HEK293 (cell line): ENCODE measurements at regions of chr7 and their contacts with region 1.

Region 1: DNA sequence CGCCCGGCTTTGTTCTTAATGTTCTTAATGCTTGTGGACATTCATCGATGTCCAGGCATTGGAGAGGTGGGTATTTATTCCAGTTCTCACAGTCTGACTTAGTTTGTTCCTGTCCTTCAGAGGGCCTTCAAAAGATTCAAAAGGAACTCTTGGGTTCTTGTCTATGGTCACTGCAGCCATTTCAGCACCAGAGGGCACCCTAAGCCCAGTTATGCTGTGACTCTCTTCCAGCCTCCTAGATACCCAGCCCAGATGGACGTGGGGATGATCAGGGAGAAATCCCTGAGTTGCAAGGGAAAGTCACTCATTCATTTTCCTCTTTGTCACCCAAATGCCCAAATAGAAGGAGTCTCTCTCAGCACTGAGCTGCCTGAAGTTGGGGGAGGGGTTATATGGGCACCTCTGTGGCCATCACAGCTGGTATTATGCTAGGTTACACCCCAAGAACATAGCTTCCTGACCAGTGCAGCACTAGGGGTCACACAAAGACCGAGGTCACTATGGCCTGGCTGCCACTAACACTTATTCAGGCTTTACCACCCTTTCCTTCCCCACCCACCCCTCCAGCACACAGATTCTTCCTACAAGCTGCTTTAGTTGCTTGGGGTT is 26.5 kb upstream of the CCDC126 start:
- H3K4me3 ChIP-seq: no peak overlapping the region
- H3K27ac ChIP-seq: no peak overlapping the region
- H3K4me1 ChIP-seq: no peaks in the 10 kb centered on the region
- CTCF ChIP-seq: peak; percentile 68; the same call in 1 of the 2 replicates

Region 2: DNA sequence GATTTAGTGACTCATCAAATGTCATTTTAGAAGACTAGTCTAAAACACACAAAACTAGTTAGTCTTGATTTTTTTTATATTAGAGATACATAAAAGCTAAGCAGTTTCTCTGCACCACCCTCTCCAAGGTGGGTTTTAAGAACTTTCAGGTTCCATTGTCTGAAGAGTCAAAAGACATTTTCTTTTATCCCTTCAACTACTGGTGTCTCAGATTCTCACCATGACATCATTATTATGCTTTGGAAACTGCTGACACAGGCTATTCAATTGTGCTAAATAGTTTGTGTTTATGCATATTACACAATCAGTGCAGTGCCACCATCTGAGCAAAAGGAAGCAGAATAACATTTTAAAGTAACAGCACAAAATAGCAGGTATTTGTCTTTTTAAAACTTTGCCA is 152.7 kb before region 1 on chr7:
- CTCF ChIA-PET with region 1: no interaction called
- POLR2A ChIA-PET with region 1: no interaction called
- H3K4me3 ChIP-seq: no peak overlapping the region
- H3K27ac ChIP-seq: no peak overlapping the region
- H3K4me1 ChIP-seq: peaks cover 23% of the 10 kb centered on the region
- CTCF ChIP-seq: no peak

Region 3: DNA sequence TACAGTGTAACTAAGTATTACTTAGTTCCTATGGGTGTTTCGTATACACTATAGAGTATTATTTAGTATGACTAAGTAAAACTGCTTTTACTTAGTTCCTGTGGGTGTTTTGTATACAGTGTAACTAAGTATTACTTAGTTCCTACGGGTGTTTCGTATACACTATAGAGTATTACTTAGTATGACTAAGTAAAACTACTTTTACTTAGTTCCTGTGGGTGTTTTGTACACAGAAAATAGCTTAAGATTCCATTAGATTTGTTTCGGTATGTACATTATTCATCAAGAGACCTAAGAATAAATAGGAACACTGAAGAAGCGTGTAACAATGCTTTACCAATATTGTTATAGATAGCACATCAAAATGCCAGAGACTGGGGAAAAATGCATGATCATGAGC is 125.4 kb before region 1 on chr7:
- CTCF ChIA-PET with region 1: no interaction called
- POLR2A ChIA-PET with region 1: no interaction called
- H3K4me3 ChIP-seq: no peak overlapping the region
- H3K27ac ChIP-seq: no peak overlapping the region
- H3K4me1 ChIP-seq: peaks cover 9% of the 10 kb centered on the region
- CTCF ChIP-seq: no peak

Region 4: GRCh38 chr7:23474094-23474828 is 96.4 kb before region 1 on chr7:
- CTCF ChIA-PET with region 1: no interaction called
- POLR2A ChIA-PET with region 1: no interaction called
- H3K4me3 ChIP-seq: peak overlapping the region; percentile 84
- H3K27ac ChIP-seq: peak overlapping the region; percentile 97
- H3K4me1 ChIP-seq: peaks cover 27% of the 10 kb centered on the region
- CTCF ChIP-seq: no peak; the same call in 1 of the 2 replicates

Region 5: DNA sequence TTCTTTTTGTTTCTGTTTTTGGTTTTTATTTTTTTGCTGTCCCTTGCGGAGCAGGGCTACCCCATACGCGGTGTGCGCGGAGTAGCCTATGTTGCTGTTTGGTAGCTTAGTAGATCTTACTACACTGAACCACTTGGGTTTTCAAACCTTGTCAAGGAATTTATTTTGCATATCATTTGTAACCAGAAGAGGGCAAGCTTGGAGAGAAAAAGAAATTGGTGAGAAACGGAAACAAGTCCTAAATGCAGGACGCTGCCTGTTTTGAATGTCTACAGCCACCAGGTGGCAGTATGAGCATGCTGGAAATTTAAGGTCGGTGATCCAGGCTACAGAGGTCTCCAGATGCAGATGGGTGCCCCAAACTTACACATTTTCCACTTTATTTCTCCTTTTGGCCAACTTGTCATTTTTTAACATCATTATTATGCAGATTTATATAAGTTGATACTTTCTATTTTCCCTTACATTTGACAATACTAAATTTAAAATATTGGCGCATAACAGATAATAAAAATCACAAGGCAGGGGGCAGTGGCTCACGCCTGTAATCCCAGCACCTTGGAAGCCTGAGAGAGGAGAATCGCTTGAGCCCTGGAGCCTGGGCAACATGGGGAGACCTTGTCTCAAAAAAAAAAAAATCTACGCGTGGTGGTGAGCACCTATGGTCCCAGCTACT is 23.7 kb before region 1 on chr7:
- CTCF ChIA-PET with region 1: interaction called, 15 read pairs
- POLR2A ChIA-PET with region 1: no interaction called
- H3K4me3 ChIP-seq: no peak overlapping the region
- H3K27ac ChIP-seq: no peak overlapping the region
- H3K4me1 ChIP-seq: no peaks in the 10 kb centered on the region; the same call in 1 of the 2 replicates
- CTCF ChIP-seq: peak; percentile 87

Region 6: GRCh38 chr7:24417526-24418120 is 846.9 kb after region 1 on chr7:
- CTCF ChIA-PET with region 1: interaction called, 11 read pairs
- POLR2A ChIA-PET with region 1: no interaction called
- H3K4me3 ChIP-seq: no peak overlapping the region
- H3K27ac ChIP-seq: no peak overlapping the region
- H3K4me1 ChIP-seq: no peaks in the 10 kb centered on the region
- CTCF ChIP-seq: no peak